AG04450 (cell line): ENCODE measurements at regions of chr3 and their contacts with region 1.

Region 1: DNA sequence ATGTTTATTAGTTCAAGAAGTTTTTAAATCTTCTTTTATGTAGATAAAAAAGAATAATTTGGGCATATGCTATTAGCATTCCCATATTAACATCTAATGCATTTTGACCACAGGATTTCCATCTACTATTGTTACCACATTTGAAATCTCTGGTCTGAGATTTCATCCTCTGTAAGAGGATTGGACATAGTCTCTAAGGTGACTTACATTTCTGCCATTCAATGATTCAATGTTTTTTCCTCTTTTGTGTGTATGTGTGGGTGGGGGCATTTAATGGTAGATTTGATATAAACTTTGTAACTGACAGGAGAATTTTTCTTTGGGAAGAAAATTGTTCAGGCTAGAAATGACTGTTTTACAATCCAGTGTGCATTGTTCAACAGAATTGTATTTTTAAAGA is 307.3 kb upstream of the RBMS3 start:
- DNase-seq: no peak
- H3K4me3 ChIP-seq: no peak overlapping the region
- H3K27ac ChIP-seq: no peak overlapping the region
- H3K27me3 ChIP-seq: no peaks in the 10 kb centered on the region
- CTCF ChIP-seq: no peak

Region 2: GRCh38 chr3:28935146-28935545 is 38.5 kb before region 1 on chr3:
- CTCF ChIA-PET with region 1: no interaction called
- POLR2A ChIA-PET with region 1: interaction called, 10 read pairs
- DNase-seq: no peak
- H3K4me3 ChIP-seq: no peak overlapping the region
- H3K27ac ChIP-seq: no peak overlapping the region
- H3K27me3 ChIP-seq: peaks cover 3% of the 10 kb centered on the region
- CTCF ChIP-seq: no peak